Endothelial cell of umbilical vein (primary cell): ENCODE measurements at regions of chr11 and their contacts with region 1.

Region 1: DNA sequence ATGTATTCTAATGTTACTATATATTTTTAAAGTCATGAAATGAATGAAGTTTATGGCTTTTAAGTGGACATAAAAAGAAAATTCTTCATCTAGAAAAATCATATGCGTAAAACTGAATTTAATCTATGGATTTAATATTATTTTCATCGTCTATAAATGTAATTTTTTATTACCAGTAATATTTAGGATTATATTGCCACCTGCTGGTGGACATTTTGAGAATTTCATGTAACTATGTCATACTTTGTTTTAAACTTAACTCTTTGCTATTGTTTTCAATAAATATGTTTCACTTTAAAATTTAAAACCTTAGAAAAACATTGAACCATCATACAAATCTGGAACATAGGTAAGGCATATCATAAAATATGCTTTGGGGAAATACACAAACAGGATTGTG is 66.5 kb upstream of the CEP126 start:
- DNase-seq: peak; percentile 8
- H3K4me3 ChIP-seq: no peak overlapping the region
- H3K27ac ChIP-seq: no peak overlapping the region
- H3K4me1 ChIP-seq: no peaks in the 10 kb centered on the region
- H3K27me3 ChIP-seq: no peaks in the 10 kb centered on the region
- CTCF ChIP-seq: peak in 1 of 2 donors; percentile 15
- POLR2A ChIP-seq: no peak

Region 2: GRCh38 chr11:100575870-100576705 is 1272.2 kb before region 1 on chr11:
- CTCF ChIA-PET with region 1: interaction called, 7 read pairs
- POLR2A ChIA-PET with region 1: no interaction called
- dilution Hi-C with region 1: no loop called
- intact Hi-C with region 1: loop called (anchors 5 kb)
- DNase-seq: peak; percentile 56
- H3K4me3 ChIP-seq: no peak overlapping the region
- H3K27ac ChIP-seq: no peak overlapping the region
- H3K4me1 ChIP-seq: no peaks in the 10 kb centered on the region
- H3K27me3 ChIP-seq: peaks cover 0 to 11% of the 10 kb centered on the region in 2 experiments
- CTCF ChIP-seq: peak; percentile 37 to 59
- POLR2A ChIP-seq: no peak

Region 3: DNA sequence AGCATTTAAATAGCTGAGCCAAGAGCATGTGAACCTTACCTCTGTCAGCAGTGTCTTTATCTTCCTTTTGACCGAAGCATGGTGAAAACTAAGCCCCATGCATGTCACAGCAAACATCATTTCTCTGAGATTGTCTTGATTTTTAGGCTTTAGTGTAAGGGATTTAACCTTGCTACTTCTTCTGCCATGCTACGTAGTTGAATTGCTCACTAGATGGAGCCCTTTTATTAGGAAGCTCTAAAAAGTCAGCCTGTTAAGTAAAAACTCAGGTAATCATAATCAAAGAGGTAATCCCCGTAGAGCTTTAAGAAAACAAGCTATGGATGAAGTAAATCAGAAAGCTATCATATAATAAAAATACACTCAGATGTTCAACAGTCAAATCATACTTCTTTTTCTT is 868.1 kb before region 1 on chr11:
- CTCF ChIA-PET with region 1: interaction called, 19 read pairs
- POLR2A ChIA-PET with region 1: no interaction called
- dilution Hi-C with region 1: no loop called
- intact Hi-C with region 1: no loop called
- DNase-seq: peak; percentile 24
- H3K4me3 ChIP-seq: no peak overlapping the region
- H3K27ac ChIP-seq: no peak overlapping the region
- H3K4me1 ChIP-seq: no peaks in the 10 kb centered on the region
- H3K27me3 ChIP-seq: no peaks in the 10 kb centered on the region
- CTCF ChIP-seq: no peak
- POLR2A ChIP-seq: no peak

Region 4: DNA sequence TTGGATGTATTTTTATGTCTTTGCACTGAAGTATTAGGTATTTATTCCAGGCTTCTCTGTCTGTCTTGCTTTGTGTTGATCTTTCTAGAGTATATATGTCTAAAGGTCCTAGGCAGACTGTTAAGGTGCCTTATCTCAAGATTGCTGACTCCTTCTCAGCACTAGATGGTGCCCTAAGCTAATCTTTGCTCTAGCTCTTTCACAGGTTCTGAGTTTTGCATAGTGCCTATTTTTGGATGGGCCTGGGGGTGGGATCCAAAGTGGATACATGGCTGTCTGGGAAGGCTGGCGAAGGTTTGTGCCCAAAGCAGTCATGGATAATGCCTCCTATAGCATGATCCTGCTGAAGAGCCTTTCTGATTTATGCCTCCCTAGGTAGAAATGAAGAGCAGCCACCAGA is 419.3 kb before region 1 on chr11:
- CTCF ChIA-PET with region 1: no interaction called
- POLR2A ChIA-PET with region 1: no interaction called
- dilution Hi-C with region 1: no loop called
- intact Hi-C with region 1: loop called (anchors 2 kb)
- DNase-seq: no peak
- H3K4me3 ChIP-seq: no peak overlapping the region
- H3K27ac ChIP-seq: no peak overlapping the region
- H3K4me1 ChIP-seq: no peaks in the 10 kb centered on the region
- H3K27me3 ChIP-seq: no peaks in the 10 kb centered on the region
- CTCF ChIP-seq: no peak
- POLR2A ChIP-seq: no peak

Region 5: DNA sequence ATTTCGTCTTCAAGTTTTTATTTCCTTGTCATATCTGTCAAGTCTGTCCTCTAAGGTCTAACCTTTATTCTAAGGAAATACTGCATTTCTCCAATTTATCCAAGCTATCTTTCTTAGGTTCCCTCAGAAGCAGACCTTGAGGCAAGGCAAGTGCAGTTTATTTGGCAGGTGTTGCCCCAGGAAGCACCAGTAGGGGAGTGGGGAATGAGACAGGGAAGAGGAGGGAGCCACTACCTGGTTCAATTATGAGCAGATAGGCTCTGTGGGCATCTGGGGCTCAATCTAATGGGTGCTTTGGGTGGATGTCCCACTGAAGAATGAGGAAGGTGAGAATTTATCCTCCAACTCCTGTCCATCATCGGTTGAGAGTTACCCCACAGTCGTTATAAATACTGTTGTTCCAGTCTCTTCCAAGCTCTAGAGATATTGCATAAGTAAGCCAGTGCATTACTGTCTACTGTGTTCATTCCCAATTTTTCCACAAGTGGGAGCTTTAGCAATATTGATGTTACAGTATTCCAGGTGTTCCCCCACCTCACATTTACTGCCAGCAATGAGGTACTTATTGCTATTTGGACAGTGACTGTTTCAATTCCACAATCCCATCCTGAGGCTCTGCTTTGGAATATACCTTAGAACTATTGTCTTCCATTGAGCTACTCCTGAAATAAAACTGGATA is 88.4 kb before region 1 on chr11:
- CTCF ChIA-PET with region 1: interaction called, 7 read pairs
- POLR2A ChIA-PET with region 1: no interaction called
- dilution Hi-C with region 1: no loop called
- intact Hi-C with region 1: loop called (anchors 5 kb)
- DNase-seq: peak; percentile 6
- H3K4me3 ChIP-seq: no peak overlapping the region
- H3K27ac ChIP-seq: no peak overlapping the region
- H3K4me1 ChIP-seq: no peaks in the 10 kb centered on the region
- H3K27me3 ChIP-seq: peaks cover 0 to 2% of the 10 kb centered on the region in 2 experiments
- CTCF ChIP-seq: no peak
- POLR2A ChIP-seq: no peak